CD4-positive, alpha-beta T cell (primary cell): ENCODE measurements at regions of chr10 and their contacts with region 1.

Region 1: GRCh38 chr10:96967847-96968246 is 135.7 kb downstream of the LCOR start:
- DNase-seq: no peak
- ATAC-seq: no peak
- H3K4me3 ChIP-seq: no peak overlapping the region
- H3K4me3 Mint-ChIP-seq: no peak overlapping the region
- H3K27ac ChIP-seq: no peak overlapping the region
- H3K27ac Mint-ChIP-seq: no peak overlapping the region
- H3K4me1 ChIP-seq: no peaks in the 10 kb centered on the region
- H3K4me1 Mint-ChIP-seq: no peaks in the 10 kb centered on the region
- H3K27me3 ChIP-seq: no peaks in the 10 kb centered on the region
- H3K27me3 Mint-ChIP-seq: no peaks in the 10 kb centered on the region
- CTCF ChIP-seq: no peak

Region 2: GRCh38 chr10:96416643-96417042 is 551.2 kb before region 1 on chr10:
- CTCF ChIA-PET with region 1: no interaction called
- POLR2A ChIA-PET with region 1: no interaction called
- intact Hi-C with region 1: loop called in 1 of 2 experiments (anchors 5 kb)
- DNase-seq: no peak
- ATAC-seq: no peak
- H3K4me3 ChIP-seq: no peak overlapping the region
- H3K4me3 Mint-ChIP-seq: no peak overlapping the region
- H3K27ac ChIP-seq: no peak overlapping the region
- H3K27ac Mint-ChIP-seq: no peak overlapping the region
- H3K4me1 ChIP-seq: no peaks in the 10 kb centered on the region
- H3K4me1 Mint-ChIP-seq: no peaks in the 10 kb centered on the region
- H3K27me3 ChIP-seq: peaks cover 2 to 6% of the 10 kb centered on the region in 2 experiments
- H3K27me3 Mint-ChIP-seq: no peaks in the 10 kb centered on the region
- CTCF ChIP-seq: no peak

Region 3: DNA sequence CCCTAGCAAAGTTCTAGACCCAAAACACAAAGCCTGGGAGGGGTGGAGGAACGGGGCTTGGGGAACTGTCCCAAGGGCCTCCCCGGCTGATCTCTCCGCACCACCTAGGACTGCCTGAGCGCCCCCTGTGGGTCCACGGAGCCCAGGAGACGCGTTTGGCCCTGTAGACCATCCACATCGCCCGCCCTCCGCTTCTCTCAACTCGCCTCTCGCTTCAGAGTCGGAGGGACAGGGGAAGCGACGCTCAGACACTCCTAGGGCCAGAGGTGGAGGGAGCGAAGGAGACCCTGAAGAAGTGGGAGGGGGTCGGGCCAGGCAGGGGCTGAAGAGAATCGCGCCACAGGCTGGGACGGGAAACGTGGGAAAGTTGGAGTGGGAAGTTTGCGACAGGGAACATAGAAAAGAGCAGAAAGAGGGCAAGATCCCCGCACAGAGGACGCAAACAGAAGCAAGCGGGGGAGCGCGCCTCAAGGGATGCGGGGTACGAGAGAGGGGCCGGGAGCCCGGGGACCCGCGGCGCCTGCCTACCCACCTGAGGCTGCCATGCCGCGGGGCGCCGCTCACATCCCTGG is 247.9 kb before region 1 on chr10:
- CTCF ChIA-PET with region 1: no interaction called
- POLR2A ChIA-PET with region 1: no interaction called
- intact Hi-C with region 1: no loop called
- DNase-seq: peak in 13 of 14 experiments; percentile 7 to 71 (median 28)
- ATAC-seq: peak; percentile 39
- H3K4me3 ChIP-seq: peak overlapping the region; percentile 61
- H3K4me3 Mint-ChIP-seq: peak overlapping the region; percentile 96
- H3K27ac ChIP-seq: no peak overlapping the region
- H3K27ac Mint-ChIP-seq: no peak overlapping the region
- H3K4me1 ChIP-seq: peaks cover 19% of the 10 kb centered on the region
- H3K4me1 Mint-ChIP-seq: peaks cover 15% of the 10 kb centered on the region
- H3K27me3 ChIP-seq: no peaks in the 10 kb centered on the region
- H3K27me3 Mint-ChIP-seq: no peaks in the 10 kb centered on the region
- CTCF ChIP-seq: peak; percentile 47

Region 4: GRCh38 chr10:96984541-96985131 is 16.8 kb after region 1 on chr10:
- CTCF ChIA-PET with region 1: no interaction called
- POLR2A ChIA-PET with region 1: no interaction called
- intact Hi-C with region 1: no loop called
- DNase-seq: no peak
- ATAC-seq: no peak
- H3K4me3 ChIP-seq: no peak overlapping the region
- H3K4me3 Mint-ChIP-seq: no peak overlapping the region
- H3K27ac ChIP-seq: no peak overlapping the region
- H3K27ac Mint-ChIP-seq: no peak overlapping the region
- H3K4me1 ChIP-seq: no peaks in the 10 kb centered on the region
- H3K4me1 Mint-ChIP-seq: no peaks in the 10 kb centered on the region
- H3K27me3 ChIP-seq: no peaks in the 10 kb centered on the region
- H3K27me3 Mint-ChIP-seq: no peaks in the 10 kb centered on the region
- CTCF ChIP-seq: no peak

Region 5: GRCh38 chr10:97025613-97026242 is 57.9 kb after region 1 on chr10:
- CTCF ChIA-PET with region 1: no interaction called
- POLR2A ChIA-PET with region 1: no interaction called
- intact Hi-C with region 1: no loop called
- DNase-seq: peak in 13 of 14 experiments; percentile 12 to 72 (median 32)
- ATAC-seq: no peak
- H3K4me3 ChIP-seq: no peak overlapping the region
- H3K4me3 Mint-ChIP-seq: no peak overlapping the region
- H3K27ac ChIP-seq: no peak overlapping the region
- H3K27ac Mint-ChIP-seq: no peak overlapping the region
- H3K4me1 ChIP-seq: no peaks in the 10 kb centered on the region
- H3K4me1 Mint-ChIP-seq: no peaks in the 10 kb centered on the region
- H3K27me3 ChIP-seq: no peaks in the 10 kb centered on the region
- H3K27me3 Mint-ChIP-seq: no peaks in the 10 kb centered on the region
- CTCF ChIP-seq: peak; percentile 68